ENCODE measurements at regions of chr10 and their contacts with region 1.

Region 1: DNA sequence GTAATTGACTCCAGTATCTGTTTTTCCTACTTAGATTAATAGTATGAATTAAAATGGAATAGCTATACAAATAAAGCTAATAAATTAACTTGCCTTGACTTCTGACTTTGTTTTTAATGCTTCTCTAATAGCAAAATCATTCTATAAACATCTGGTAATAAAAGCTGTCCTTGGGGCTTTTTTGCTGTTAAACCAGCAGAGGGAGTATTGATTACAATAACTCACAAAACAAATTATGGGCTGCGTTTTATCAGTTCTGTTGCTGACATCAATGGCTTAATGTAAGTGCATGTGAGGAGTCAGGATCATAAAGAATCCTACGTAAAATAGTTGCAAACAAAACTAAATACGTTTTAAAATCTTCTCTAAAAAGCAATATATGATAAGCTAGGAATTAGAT is 667.8 kb downstream of the PCDH15 start:
- DNase-seq: no peak
- ATAC-seq: 0 out of 3 replicates have a peak, but pooled peaks have one; percentile 20
- H3K4me3 ChIP-seq: no peak overlapping the region
- H3K27ac ChIP-seq: no peak overlapping the region
- H3K4me1 ChIP-seq: no peaks in the 10 kb centered on the region
- H3K27me3 ChIP-seq: no peaks in the 10 kb centered on the region
- CTCF ChIP-seq: peak; percentile 9 to 36 (median 25); a peak in 3 of 6 replicates
- EP300 ChIP-seq: no peak
- POLR2A ChIP-seq: no peak
- RAD21 ChIP-seq: peak; percentile 53; the same call in 1 of the 2 replicates

Region 2: GRCh38 chr10:54063514-54063913 is 69.7 kb before region 1 on chr10:
- CTCF ChIA-PET with region 1: interaction called, 15 read pairs
- POLR2A ChIA-PET with region 1: interaction called, 3 read pairs
- RAD21 ChIA-PET with region 1: interaction called, 7 read pairs
- SMC1A ChIA-PET with region 1: interaction called, 12 read pairs
- in situ Hi-C with region 1: no loop called
- intact Hi-C with region 1: no loop called
- DNase-seq: no peak
- ATAC-seq: no peak
- H3K4me3 ChIP-seq: no peak overlapping the region
- H3K27ac ChIP-seq: no peak overlapping the region
- H3K4me1 ChIP-seq: no peaks in the 10 kb centered on the region
- H3K27me3 ChIP-seq: no peaks in the 10 kb centered on the region
- CTCF ChIP-seq: no peak
- EP300 ChIP-seq: no peak
- POLR2A ChIP-seq: no peak
- RAD21 ChIP-seq: no peak

Region 3: DNA sequence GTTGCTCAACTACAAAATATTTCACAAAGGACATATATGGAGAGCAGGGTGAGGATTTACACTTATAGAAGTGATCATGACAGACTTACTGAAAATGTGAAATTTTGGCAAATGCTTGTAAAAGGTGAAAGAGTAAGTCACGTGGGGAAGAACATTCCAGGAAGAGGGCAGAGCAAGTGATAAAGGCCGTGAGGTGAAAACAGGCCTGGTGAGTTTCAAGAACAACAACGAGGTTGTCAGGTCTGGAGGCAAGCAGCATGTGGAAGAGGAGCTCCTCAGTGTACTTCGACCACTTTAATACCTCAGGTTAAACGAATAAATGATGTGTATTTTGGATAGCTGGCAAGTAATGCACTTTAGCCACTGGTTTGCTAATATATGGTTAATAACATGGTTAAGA is 38.9 kb before region 1 on chr10:
- CTCF ChIA-PET with region 1: interaction called, 10 read pairs
- POLR2A ChIA-PET with region 1: interaction called, 3 read pairs
- RAD21 ChIA-PET with region 1: interaction called, 11 read pairs
- SMC1A ChIA-PET with region 1: interaction called, 28 read pairs
- in situ Hi-C with region 1: no loop called
- intact Hi-C with region 1: no loop called
- DNase-seq: no peak
- ATAC-seq: no peak
- H3K4me3 ChIP-seq: no peak overlapping the region
- H3K27ac ChIP-seq: no peak overlapping the region
- H3K4me1 ChIP-seq: no peaks in the 10 kb centered on the region
- H3K27me3 ChIP-seq: no peaks in the 10 kb centered on the region
- CTCF ChIP-seq: no peak
- EP300 ChIP-seq: no peak
- POLR2A ChIP-seq: no peak
- RAD21 ChIP-seq: no peak

Region 4: GRCh38 chr10:54148506-54148905 is 15.3 kb after region 1 on chr10:
- CTCF ChIA-PET with region 1: interaction called, 18 read pairs
- POLR2A ChIA-PET with region 1: interaction called, 5 read pairs
- RAD21 ChIA-PET with region 1: interaction called, 4 read pairs
- SMC1A ChIA-PET with region 1: interaction called, 9 read pairs
- in situ Hi-C with region 1: no loop called
- intact Hi-C with region 1: no loop called
- DNase-seq: no peak
- ATAC-seq: no peak
- H3K4me3 ChIP-seq: no peak overlapping the region
- H3K27ac ChIP-seq: no peak overlapping the region
- H3K4me1 ChIP-seq: no peaks in the 10 kb centered on the region
- H3K27me3 ChIP-seq: no peaks in the 10 kb centered on the region
- CTCF ChIP-seq: no peak
- EP300 ChIP-seq: no peak
- POLR2A ChIP-seq: no peak
- RAD21 ChIP-seq: no peak

Region 5: DNA sequence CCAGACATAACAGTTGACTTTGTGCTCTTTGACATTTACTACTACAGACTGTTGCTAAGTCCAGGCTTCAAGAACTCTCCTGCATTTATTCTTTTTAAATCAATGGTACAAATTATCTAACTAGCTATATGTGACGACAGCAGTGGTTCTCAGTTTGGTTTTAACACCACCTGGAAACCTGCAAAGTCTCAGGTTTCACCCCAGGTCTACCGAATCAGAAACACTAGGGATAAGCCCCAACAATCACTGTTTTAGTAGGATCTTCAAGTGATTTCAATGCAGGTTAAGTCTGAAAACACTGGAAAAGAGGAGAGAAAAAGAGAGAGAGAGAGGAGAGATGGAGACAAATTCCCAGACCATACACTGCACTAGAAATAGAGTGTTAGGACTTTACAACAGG is 148.8 kb after region 1 on chr10:
- CTCF ChIA-PET with region 1: interaction called, 16 read pairs
- POLR2A ChIA-PET with region 1: no interaction called
- RAD21 ChIA-PET with region 1: interaction called, 5 read pairs
- SMC1A ChIA-PET with region 1: interaction called, 11 read pairs
- in situ Hi-C with region 1: no loop called
- intact Hi-C with region 1: no loop called
- DNase-seq: no peak
- ATAC-seq: no peak
- H3K4me3 ChIP-seq: no peak overlapping the region
- H3K27ac ChIP-seq: no peak overlapping the region
- H3K4me1 ChIP-seq: no peaks in the 10 kb centered on the region
- H3K27me3 ChIP-seq: no peaks in the 10 kb centered on the region
- CTCF ChIP-seq: no peak
- EP300 ChIP-seq: no peak
- POLR2A ChIP-seq: no peak
- RAD21 ChIP-seq: no peak

Region 6: DNA sequence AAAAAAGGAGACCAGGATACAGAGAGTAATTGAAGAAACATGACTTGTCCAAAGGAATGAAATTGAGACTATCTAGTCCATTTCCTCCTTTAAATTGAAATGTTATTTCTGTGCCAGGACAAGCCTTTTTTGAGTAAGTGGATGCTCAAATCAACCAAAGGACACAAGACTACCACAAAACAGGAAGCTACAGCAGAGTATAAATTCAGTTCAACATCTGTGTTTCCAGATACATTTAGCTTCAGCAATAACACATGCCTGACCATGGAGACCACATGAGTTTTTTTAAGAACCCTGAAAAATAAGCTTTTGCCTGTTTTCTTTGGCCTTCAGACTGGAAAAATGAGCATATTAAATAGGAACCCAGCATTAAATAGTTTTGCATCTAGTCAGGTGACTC is 1520.3 kb after region 1 on chr10:
- CTCF ChIA-PET with region 1: no interaction called
- POLR2A ChIA-PET with region 1: no interaction called
- RAD21 ChIA-PET with region 1: no interaction called
- SMC1A ChIA-PET with region 1: no interaction called
- in situ Hi-C with region 1: no loop called
- intact Hi-C with region 1: no loop called
- DNase-seq: no peak
- ATAC-seq: no peak
- H3K4me3 ChIP-seq: no peak overlapping the region
- H3K27ac ChIP-seq: no peak overlapping the region
- H3K4me1 ChIP-seq: no peaks in the 10 kb centered on the region
- H3K27me3 ChIP-seq: no peaks in the 10 kb centered on the region
- CTCF ChIP-seq: no peak
- EP300 ChIP-seq: no peak
- POLR2A ChIP-seq: no peak
- RAD21 ChIP-seq: no peak

Measured in GM12878 (cell line).